ENCODE measurements at regions of chr1 and their contacts with region 1.

Region 1: DNA sequence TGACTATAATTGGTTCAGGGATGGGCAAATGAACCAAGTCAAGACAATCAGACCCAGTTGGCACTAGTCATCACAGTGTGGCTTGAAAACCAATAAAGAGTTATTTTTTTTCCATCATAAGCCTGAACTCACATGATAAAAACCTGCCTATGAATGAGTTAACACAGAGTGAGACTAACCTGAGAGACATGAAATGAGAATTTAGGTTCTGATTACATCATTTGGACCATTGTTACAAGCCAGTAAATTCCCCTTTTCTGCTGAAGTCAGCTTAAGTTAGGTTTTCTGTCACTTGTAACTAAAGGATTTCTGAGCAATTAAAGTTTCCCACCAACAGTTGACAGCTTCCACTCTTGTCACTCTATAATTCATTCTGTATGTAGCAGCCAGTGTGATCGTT is 9.6 kb upstream of the RSBN1 start:
- DNase-seq: no peak
- ATAC-seq: no peak

Region 2: GRCh38 chr1:113887402-113888175 is 65.7 kb after region 1 on chr1 and contains the start of gene BCL2L15:
- intact Hi-C with region 1: no loop called
- DNase-seq: no peak
- ATAC-seq: no peak
- total RNA-seq, gene BCL2L15: not detected

Region 3: GRCh38 chr1:114549137-114549536 is 727.2 kb after region 1 on chr1:
- intact Hi-C with region 1: loop called (anchors 10 kb)
- DNase-seq: no peak
- ATAC-seq: no peak